ENCODE measurements at regions of chr5 and their contacts with region 1.

Region 1: DNA sequence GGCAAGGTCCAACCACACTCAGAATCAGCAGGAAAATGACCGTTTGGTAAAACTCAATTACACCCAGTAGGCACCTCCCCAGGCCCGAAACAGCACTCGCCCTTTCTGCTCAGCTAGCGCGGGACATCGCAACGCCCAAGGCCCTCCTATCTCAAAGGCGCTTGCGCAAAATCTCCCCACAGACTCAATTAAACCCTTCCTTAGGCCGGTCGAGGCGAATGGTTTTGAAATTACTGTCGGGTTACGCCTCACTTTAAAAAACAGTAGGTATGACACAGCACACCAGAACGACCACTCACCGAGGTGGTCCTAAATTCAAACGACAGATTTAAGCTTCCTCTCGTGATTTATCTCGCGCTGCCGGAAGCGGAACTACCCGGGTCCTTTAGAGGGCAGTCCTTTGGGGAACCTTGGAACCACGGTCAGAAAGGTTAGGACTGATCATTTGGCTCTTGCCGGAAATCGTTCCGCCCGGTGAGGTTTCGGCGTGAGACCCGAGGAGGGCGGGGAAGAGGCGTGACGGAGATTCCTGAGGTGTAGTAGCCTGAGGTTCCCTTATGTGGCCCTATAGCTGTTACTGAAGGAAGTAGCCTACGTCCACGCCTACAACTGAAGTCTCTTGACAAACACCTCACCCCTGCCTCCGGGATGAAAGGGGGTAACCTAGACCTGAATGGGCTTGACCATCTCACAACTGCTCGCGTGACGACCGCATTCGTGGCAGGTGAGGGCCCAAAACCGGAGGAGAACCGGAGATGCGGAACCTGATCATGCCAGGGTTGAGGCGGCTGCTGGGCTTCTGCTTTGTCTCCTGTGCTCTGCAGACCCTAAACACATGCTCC is at the starts of genes GIN1 and PPIP5K2:
- DNase-seq: peak; percentile 98
- ATAC-seq: peak; percentile 89
- H3K4me3 Mint-ChIP-seq: peak within 1 kb of the TSS; percentile 97
- H3K27ac Mint-ChIP-seq: peak within 1 kb of the TSS; percentile 99
- H3K4me1 Mint-ChIP-seq: peaks cover 39% of the 10 kb centered on the region
- H3K27me3 Mint-ChIP-seq: no peaks in the 10 kb centered on the region
- CTCF ChIP-seq: no peak
- total RNA-seq, gene GIN1: 9.8 to 11.7 TPM
- total RNA-seq, gene PPIP5K2: 50.5 to 59.5 TPM

Region 2: DNA sequence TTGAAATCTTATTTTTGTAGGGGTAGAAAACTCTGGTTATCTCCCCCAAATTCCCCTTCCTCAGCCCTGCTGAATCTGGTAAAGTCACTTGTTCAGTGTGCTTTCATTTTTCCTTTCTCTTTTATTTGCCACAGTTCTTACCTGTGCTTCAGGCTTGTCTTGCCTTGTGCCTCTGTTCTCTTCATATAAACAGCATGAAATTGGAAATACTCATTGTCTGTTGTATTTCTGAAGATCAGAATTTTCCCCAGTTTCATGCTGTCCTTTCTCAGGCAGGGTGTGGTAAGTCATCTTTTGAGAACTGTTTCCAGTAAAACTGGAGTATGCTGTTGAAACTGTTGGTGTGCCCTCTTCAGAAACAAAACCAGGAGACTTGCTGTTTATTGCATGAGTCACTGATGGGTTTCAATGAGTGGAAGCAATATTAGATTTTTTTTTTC is 357.9 kb before region 1 on chr5:
- CTCF ChIA-PET with region 1: no interaction called
- POLR2A ChIA-PET with region 1: no interaction called
- intact Hi-C with region 1: loop called (anchors 10 kb)
- DNase-seq: no peak
- ATAC-seq: peak; percentile 64
- H3K4me3 Mint-ChIP-seq: peak overlapping the region; percentile 61
- H3K27ac Mint-ChIP-seq: peak overlapping the region; percentile 82
- H3K4me1 Mint-ChIP-seq: peaks cover 82% of the 10 kb centered on the region
- H3K27me3 Mint-ChIP-seq: no peaks in the 10 kb centered on the region
- CTCF ChIP-seq: no peak